PC-3 (cell line): ENCODE measurements at regions of chr2 and their contacts with region 1.

Region 1: GRCh38 chr2:140624194-140624593 is 1506.6 kb downstream of the LRP1B start:
- DNase-seq: peak; percentile 94
- ATAC-seq: peak; percentile 99
- H3K4me3 ChIP-seq: no peak overlapping the region
- H3K27ac ChIP-seq: peak overlapping the region; percentile 75
- H3K4me1 ChIP-seq: peaks cover 21% of the 10 kb centered on the region
- H3K27me3 ChIP-seq: no peaks in the 10 kb centered on the region
- CTCF ChIP-seq: no peak

Region 2: DNA sequence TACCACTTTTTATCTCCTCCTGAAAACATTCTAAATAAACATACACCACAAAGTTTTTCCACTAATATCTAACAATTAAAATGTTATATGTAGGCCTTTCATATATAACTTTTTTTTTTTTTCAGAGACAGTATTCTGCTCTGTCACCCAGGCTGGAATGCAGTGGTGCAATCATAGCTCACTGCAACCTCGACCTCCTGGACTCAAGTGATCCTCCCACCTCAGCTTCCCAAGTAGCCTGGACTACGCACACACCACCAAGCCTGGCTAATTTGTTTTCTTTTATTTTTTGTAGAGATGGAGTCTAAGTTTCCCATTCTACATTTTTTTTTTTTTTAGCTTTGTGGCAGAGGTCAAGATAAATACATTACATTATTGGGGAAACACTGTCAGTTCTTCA is 231.4 kb before region 1 on chr2:
- CTCF ChIA-PET with region 1: no interaction called
- POLR2A ChIA-PET with region 1: no interaction called
- intact Hi-C with region 1: loop called (anchors 2 kb)
- DNase-seq: no peak
- ATAC-seq: no peak
- H3K4me3 ChIP-seq: no peak overlapping the region
- H3K27ac ChIP-seq: no peak overlapping the region
- H3K4me1 ChIP-seq: peaks cover 26% of the 10 kb centered on the region
- H3K27me3 ChIP-seq: no peaks in the 10 kb centered on the region
- CTCF ChIP-seq: no peak

Region 3: DNA sequence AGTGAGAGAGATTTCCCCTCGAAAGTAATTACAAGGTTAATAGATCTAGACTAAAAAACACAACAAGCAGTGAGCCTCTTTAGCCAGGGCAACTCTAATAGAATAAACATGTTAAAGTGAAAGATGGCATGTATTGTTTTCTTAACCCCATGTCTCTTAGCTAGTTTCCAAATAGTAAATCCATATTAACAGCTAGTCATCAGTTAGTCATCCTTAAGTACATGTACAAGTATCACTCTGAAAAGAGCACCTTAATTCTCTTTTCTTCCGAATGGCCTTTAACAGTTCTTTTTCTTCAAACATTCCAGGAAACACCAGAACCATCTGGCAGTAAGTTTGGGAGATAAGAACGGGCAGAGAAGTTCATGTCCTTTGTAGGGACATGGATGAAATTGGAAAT is 26.6 kb after region 1 on chr2:
- CTCF ChIA-PET with region 1: no interaction called
- POLR2A ChIA-PET with region 1: no interaction called
- intact Hi-C with region 1: loop called (anchors 1 kb)
- DNase-seq: peak; percentile 81
- ATAC-seq: peak; percentile 90
- H3K4me3 ChIP-seq: no peak overlapping the region
- H3K27ac ChIP-seq: peak overlapping the region; percentile 76
- H3K4me1 ChIP-seq: peaks cover 28% of the 10 kb centered on the region
- H3K27me3 ChIP-seq: no peaks in the 10 kb centered on the region
- CTCF ChIP-seq: no peak

Region 4: DNA sequence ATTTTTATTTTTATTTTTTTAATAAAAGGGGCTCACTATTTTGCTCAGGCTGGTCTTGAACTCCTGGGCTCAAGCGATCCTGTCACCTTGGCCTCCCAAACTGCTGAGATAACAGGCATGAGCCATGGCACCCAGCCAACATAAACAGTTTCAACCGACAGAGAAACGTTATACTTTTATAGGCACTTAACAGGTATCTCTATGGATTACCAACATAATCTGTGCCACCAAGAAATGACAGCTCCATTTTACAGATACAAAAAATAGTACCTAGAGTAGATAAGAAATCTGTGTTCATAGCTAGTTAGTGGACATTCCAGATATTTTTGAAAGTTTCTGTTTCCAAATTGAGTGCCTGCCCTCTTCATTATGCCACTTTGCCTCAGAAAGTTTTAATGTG is 189.9 kb after region 1 on chr2:
- CTCF ChIA-PET with region 1: no interaction called
- POLR2A ChIA-PET with region 1: no interaction called
- intact Hi-C with region 1: loop called (anchors 10 kb)
- DNase-seq: no peak
- ATAC-seq: no peak
- H3K4me3 ChIP-seq: no peak overlapping the region
- H3K27ac ChIP-seq: no peak overlapping the region
- H3K4me1 ChIP-seq: no peaks in the 10 kb centered on the region
- H3K27me3 ChIP-seq: no peaks in the 10 kb centered on the region
- CTCF ChIP-seq: no peak